ENCODE measurements at regions of chr16 and their contacts with region 1.

Region 1: DNA sequence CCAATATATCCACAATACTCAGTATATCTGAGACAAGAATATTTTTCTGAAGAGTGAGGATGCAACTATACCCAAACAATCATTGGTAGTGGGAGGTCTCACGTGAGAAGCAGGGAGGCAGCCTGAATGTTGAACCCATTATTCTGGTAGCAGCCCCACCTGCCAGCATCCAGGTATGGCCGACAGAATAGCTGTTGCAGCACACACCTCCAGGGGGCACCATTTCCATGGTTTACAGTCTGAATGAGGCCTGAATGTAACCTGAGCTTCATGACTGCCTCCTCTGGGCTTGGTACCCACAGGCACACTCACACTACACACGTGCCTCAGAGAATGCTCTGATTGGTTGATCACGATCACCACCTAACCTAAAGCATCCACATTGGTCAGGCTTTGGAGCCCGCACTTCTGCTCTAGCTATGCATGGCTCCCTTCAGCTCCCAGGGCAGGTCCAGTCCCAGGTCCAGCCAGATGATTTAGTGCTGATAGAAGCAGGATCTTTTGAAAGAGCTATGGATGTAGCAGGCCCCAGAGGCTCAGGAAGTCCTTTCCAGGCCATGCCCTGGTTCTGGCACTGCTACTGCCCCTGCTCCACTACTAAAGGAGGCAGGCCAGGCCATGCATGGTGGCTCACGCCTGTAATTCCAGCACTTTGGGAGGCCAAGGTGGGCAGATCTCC is 11.0 kb upstream of the CBFB start:
- DNase-seq: peak; percentile 94
- ATAC-seq: peak; percentile 86
- H3K4me3 Mint-ChIP-seq: no peak overlapping the region
- H3K27ac Mint-ChIP-seq: peak overlapping the region; percentile 46
- H3K4me1 Mint-ChIP-seq: peaks cover 41% of the 10 kb centered on the region
- H3K27me3 Mint-ChIP-seq: no peaks in the 10 kb centered on the region

Region 2: GRCh38 chr16:66954097-66954659 is 63.8 kb before region 1 on chr16:
- CTCF ChIA-PET with region 1: interaction called, 19 read pairs
- DNase-seq: peak; percentile 88
- ATAC-seq: peak; percentile 89
- H3K4me3 Mint-ChIP-seq: no peak overlapping the region
- H3K27ac Mint-ChIP-seq: no peak overlapping the region
- H3K4me1 Mint-ChIP-seq: peaks cover 40% of the 10 kb centered on the region
- H3K27me3 Mint-ChIP-seq: peaks cover 21% of the 10 kb centered on the region

Region 3: DNA sequence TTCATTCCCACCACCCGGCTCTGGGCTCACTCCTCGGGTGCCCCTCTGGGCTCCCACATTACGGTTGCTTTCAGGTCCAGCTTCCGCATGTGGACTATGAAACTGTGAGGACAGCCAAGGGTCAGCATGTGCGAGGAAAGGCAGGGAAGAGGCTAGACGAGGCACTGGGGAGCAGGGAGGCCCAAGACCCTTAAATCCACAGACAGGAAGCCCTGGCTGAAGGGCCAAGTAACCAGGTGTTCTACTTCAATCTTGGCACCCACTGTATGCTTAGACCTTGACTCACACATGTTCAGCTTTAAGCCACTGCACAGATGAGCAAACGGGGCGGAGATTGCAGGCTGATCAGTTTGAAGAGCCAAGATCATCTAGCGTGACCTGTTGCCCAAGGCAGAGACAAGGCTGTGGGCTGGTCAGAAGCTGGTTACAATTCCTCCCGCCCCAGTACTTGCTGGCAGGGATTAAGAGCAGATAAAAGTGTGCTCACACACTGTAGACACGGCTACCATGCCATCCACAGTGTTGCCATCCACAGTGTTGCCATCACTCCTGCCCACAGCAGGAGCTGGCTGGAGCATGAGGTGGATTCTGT is 29.7 kb before region 1 on chr16 and contains the start of gene CES4A:
- CTCF ChIA-PET with region 1: interaction called, 31 read pairs
- DNase-seq: no peak
- ATAC-seq: no peak
- H3K4me3 Mint-ChIP-seq: no peak within 1 kb of the TSS
- H3K27ac Mint-ChIP-seq: peak within 1 kb of the TSS; percentile 73
- H3K4me1 Mint-ChIP-seq: peaks cover 45% of the 10 kb centered on the region
- H3K27me3 Mint-ChIP-seq: no peaks in the 10 kb centered on the region
- total RNA-seq, gene CES4A: 8.1 to 11.7 TPM

Region 4: GRCh38 chr16:67028555-67029248 is 10.8 kb after region 1 on chr16 and contains the start of gene CBFB:
- CTCF ChIA-PET with region 1: interaction called, 75 read pairs
- DNase-seq: peak; percentile 95
- ATAC-seq: peak; percentile 94
- H3K4me3 Mint-ChIP-seq: peak within 1 kb of the TSS; percentile 92
- H3K27ac Mint-ChIP-seq: peak within 1 kb of the TSS; percentile 94
- H3K4me1 Mint-ChIP-seq: peaks cover 48% of the 10 kb centered on the region
- H3K27me3 Mint-ChIP-seq: no peaks in the 10 kb centered on the region
- total RNA-seq, gene CBFB: 180 to 196 TPM

Region 5: GRCh38 chr16:67104061-67104460 is 86.1 kb after region 1 on chr16:
- CTCF ChIA-PET with region 1: interaction called, 155 read pairs
- DNase-seq: no peak
- ATAC-seq: no peak
- H3K4me3 Mint-ChIP-seq: no peak overlapping the region
- H3K27ac Mint-ChIP-seq: no peak overlapping the region
- H3K4me1 Mint-ChIP-seq: peaks cover 6% of the 10 kb centered on the region
- H3K27me3 Mint-ChIP-seq: no peaks in the 10 kb centered on the region

Region 6: GRCh38 chr16:67173808-67174705 is 156.1 kb after region 1 on chr16:
- CTCF ChIA-PET with region 1: interaction called, 10 read pairs
- DNase-seq: peak; percentile 81
- ATAC-seq: peak; percentile 79
- H3K4me3 Mint-ChIP-seq: peak overlapping the region; percentile 76
- H3K27ac Mint-ChIP-seq: peak overlapping the region; percentile 69
- H3K4me1 Mint-ChIP-seq: peaks cover 47% of the 10 kb centered on the region
- H3K27me3 Mint-ChIP-seq: peaks cover 48% of the 10 kb centered on the region

Measured in activated CD8-positive, alpha-beta memory T cell treated with anti-CD3 and anti-CD28 coated beads, Interleukin-2, amount 10 ng/mL, durations not matched to agents 7 days and 5 days (primary cell).